GM10248 (cell line): ENCODE measurements at regions of chr2 and their contacts with region 1.

Region 1: GRCh38 chr2:63424329-63425078 is 163.8 kb downstream of the WDPCP start:
- DNase-seq: peak; percentile 57
- CTCF ChIP-seq: peak; percentile 34

Region 2: DNA sequence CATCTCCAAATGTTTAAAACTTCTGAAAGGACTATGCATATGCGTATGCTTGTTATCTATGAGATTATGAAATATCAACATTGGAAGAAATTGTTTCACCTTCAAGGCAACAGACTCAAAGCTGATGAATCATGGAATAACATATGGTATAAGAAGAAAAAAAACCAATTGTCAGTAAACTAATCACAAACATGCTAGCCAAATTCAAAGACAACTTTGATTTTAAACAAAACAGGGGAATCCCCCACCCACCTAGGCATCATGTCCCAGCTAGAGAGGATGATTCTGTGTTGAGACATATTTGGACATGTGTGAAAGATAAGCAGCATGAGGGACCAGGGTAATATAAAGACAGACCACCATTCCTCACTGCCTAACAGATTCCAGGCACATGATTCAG is 16.1 kb after region 1 on chr2:
- CTCF ChIA-PET with region 1: interaction called, 28 read pairs
- POLR2A ChIA-PET with region 1: no interaction called
- DNase-seq: no peak
- CTCF ChIP-seq: no peak